Activated CD4-positive, alpha-beta T cell treated with anti-CD3 and anti-CD28 coated beads for 36 hours (primary cell): ENCODE measurements at regions of chr12 and their contacts with region 1.

Region 1: GRCh38 chr12:95217377-95218149 is at the starts of genes FGD6 and VEZT:
- DNase-seq: peak; percentile 98
- ATAC-seq: peak; percentile 95
- H3K4me3 Mint-ChIP-seq: peak within 1 kb of the TSS; percentile 86
- H3K27ac Mint-ChIP-seq: peak within 1 kb of the TSS; percentile 93
- H3K4me1 Mint-ChIP-seq: peaks cover 31% of the 10 kb centered on the region
- H3K27me3 Mint-ChIP-seq: peaks cover 3% of the 10 kb centered on the region
- total RNA-seq, gene FGD6: 1.1 to 1.3 TPM
- total RNA-seq, gene VEZT: 55.8 to 72.7 TPM

Region 2: GRCh38 chr12:94769047-94769420 is 448.5 kb before region 1 on chr12:
- CTCF ChIA-PET with region 1: no interaction called
- POLR2A ChIA-PET with region 1: no interaction called
- intact Hi-C with region 1: no loop called
- DNase-seq: no peak
- ATAC-seq: peak; percentile 33
- H3K4me3 Mint-ChIP-seq: no peak overlapping the region
- H3K27ac Mint-ChIP-seq: no peak overlapping the region
- H3K4me1 Mint-ChIP-seq: no peaks in the 10 kb centered on the region
- H3K27me3 Mint-ChIP-seq: peaks cover 6% of the 10 kb centered on the region

Region 3: DNA sequence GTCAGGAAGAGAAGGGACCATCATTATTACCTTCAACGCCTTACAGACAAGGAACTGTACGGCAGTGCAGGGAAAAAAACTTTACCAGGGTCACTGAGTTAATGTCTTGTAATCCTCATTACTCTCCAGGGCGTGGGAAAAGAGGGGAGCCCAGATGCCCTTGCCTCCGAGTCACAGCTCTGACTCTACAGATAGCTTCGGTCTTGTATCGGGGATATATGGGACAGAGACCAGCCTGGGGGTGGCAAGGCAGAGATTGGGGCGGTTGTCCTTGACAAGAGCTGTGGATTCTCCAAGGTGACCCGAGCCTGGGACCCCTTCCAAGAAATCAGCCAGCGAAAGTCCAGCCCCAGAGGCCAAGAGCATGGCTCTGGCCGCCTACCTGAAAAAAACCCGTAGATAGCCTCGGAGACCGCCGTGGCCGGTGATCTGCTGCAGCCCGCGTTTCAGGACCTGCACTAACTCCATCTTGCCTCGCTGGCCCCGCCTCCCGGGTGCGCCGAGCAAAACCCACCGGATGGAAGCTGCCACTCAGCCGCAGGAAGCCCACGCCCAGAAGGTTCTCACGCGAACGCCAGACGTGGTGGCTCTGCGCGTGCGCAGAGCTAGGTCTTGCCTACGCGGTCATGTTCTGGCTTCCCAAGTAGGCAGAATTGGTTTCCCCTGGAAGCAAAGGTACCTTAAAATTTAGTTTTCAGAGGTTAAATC is 214.2 kb before region 1 on chr12 and contains the start of gene NDUFA12:
- CTCF ChIA-PET with region 1: interaction called, 3 read pairs
- POLR2A ChIA-PET with region 1: interaction called, 5 read pairs
- intact Hi-C with region 1: loop called (anchors 1 kb)
- DNase-seq: peak; percentile 98
- ATAC-seq: peak; percentile 99
- H3K4me3 Mint-ChIP-seq: peak within 1 kb of the TSS; percentile 95
- H3K27ac Mint-ChIP-seq: peak within 1 kb of the TSS; percentile 90
- H3K4me1 Mint-ChIP-seq: peaks cover 49% of the 10 kb centered on the region
- H3K27me3 Mint-ChIP-seq: no peaks in the 10 kb centered on the region
- total RNA-seq, gene NDUFA12: 135 to 194 TPM

Region 4: DNA sequence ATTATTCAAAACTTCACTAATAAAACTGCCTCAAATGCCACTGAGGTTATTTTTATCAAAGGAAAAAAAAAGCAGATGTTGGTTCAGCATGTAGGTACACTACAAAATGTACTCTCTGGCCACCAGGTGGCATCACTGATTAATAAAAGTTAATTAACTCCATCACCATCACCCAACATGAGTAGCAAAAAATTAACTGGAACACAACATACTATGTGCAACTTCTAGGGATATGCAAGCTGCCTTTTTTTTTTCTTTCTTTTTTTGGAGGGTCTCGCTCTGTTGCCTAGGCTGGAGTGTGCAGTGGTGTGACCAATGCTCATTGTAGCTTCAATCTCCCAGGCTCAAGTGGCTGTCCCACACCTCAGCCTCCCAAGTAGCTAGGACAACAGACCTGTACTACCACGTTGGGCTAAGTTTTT is 100.4 kb before region 1 on chr12:
- CTCF ChIA-PET with region 1: interaction called, 5 read pairs
- POLR2A ChIA-PET with region 1: interaction called, 5 read pairs
- intact Hi-C with region 1: loop called (anchors 1 to 2 kb)
- DNase-seq: peak; percentile 75
- ATAC-seq: peak; percentile 76
- H3K4me3 Mint-ChIP-seq: no peak overlapping the region
- H3K27ac Mint-ChIP-seq: no peak overlapping the region
- H3K4me1 Mint-ChIP-seq: peaks cover 4% of the 10 kb centered on the region
- H3K27me3 Mint-ChIP-seq: no peaks in the 10 kb centered on the region

Region 5: GRCh38 chr12:95532851-95533250 is 315.3 kb after region 1 on chr12:
- CTCF ChIA-PET with region 1: no interaction called
- POLR2A ChIA-PET with region 1: no interaction called
- intact Hi-C with region 1: loop called in 1 of 2 experiments (anchors 5 kb)
- DNase-seq: peak; percentile 51
- ATAC-seq: peak; percentile 47
- H3K4me3 Mint-ChIP-seq: no peak overlapping the region
- H3K27ac Mint-ChIP-seq: no peak overlapping the region
- H3K4me1 Mint-ChIP-seq: peaks cover 6% of the 10 kb centered on the region
- H3K27me3 Mint-ChIP-seq: no peaks in the 10 kb centered on the region

Region 6: DNA sequence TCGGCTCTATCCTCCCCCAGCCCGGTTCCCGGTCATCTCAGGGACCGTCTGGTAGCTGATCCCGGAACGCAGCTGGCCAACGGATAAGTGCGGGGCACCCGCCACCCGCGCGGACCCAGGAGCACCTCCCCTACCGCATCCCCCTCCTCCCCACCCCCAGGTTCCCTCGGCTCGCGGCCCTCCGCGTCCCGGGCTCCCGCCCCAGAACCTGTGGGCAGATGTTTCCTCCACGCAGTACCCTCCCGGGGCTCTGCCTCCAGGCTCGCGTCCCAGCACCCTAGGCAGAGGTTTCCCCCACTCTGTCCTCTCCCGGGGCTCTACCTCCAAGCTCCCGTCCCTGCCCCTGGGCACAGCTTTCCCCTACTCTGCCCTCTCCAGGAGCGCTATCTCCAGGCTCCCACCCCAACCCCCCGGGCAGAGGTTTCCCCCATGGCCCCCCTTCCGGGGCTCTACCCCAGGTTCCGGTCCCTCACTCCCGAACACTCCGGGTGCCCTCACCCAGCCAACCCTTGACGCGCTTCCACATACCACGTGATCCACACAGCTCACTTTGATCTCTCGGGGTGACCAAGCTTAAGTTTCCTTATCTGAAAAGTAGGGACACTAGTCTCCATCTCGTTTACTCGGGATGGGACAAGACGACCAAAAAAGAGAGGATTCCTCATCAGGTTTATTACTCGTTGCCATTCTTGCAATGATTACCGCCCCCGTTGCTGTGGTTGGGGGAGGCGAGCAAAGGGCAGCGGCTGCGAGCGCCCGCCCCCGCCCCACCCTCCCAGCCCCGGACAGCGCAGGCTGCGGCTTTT is 725.2 kb after region 1 on chr12 and contains the start of gene CCDC38:
- CTCF ChIA-PET with region 1: no interaction called
- POLR2A ChIA-PET with region 1: no interaction called
- intact Hi-C with region 1: loop called in 1 of 2 experiments (anchors 2 kb)
- DNase-seq: peak; percentile 91
- ATAC-seq: peak; percentile 98
- H3K4me3 Mint-ChIP-seq: peak within 1 kb of the TSS; percentile 84
- H3K27ac Mint-ChIP-seq: peak within 1 kb of the TSS; percentile 91
- H3K4me1 Mint-ChIP-seq: peaks cover 4% of the 10 kb centered on the region
- H3K27me3 Mint-ChIP-seq: no peaks in the 10 kb centered on the region
- total RNA-seq, gene CCDC38: 0.21 TPM in 1 of 2 experiments, not detected in the other